Right ventricle myocardium inferior (tissue), 1 donor: ENCODE measurements at regions of chr6 and their contacts with region 1.

Region 1: GRCh38 chr6:73017476-73017875 is 207.8 kb downstream of the KHDC1L start:
- DNase-seq: no peak
- ATAC-seq: no peak

Region 2: GRCh38 chr6:73030257-73030656 is 12.8 kb after region 1 on chr6:
- intact Hi-C with region 1: loop called (anchors 1 kb)
- DNase-seq: no peak
- ATAC-seq: no peak